H1 (cell line): ENCODE measurements at regions of chr7 and their contacts with region 1.

Region 1: GRCh38 chr7:73738612-73739374 is at the start of gene ABHD11:
- DNase-seq: peak; percentile 97 to 99
- H3K4me3 ChIP-seq: peak within 1 kb of the TSS; percentile 79 to 93 (median 86)
- H3K27ac ChIP-seq: peak within 1 kb of the TSS; percentile 91
- H3K4me1 ChIP-seq: peaks cover 3 to 43% (median 25%) of the 10 kb centered on the region in 4 experiments
- H3K27me3 ChIP-seq: peaks cover 0 to 2% (median 0%) of the 10 kb centered on the region in 4 experiments; a peak in 2 of 7 replicates
- CTCF ChIP-seq: no peak
- EP300 ChIP-seq: peak in 1 of 2 experiments; percentile 85; a peak in 1 of 3 replicates
- POLR2A ChIP-seq: peak in 1 of 2 experiments; percentile 97; a peak in 2 of 3 replicates
- RAD21 ChIP-seq: peak in 1 of 2 experiments; percentile 12; a peak in 1 of 4 replicates
- total RNA-seq, gene ABHD11: 19.8 and 19.9 TPM in 2 replicates

Region 2: GRCh38 chr7:73606801-73607691 is 131.7 kb before region 1 on chr7:
- CTCF ChIA-PET with region 1: interaction called, 87 read pairs
- POLR2A ChIA-PET with region 1: interaction called, 7 read pairs
- DNase-seq: peak in 1 of 2 experiments; percentile 97
- H3K4me3 ChIP-seq: peak overlapping the region in 3 of 4 experiments; percentile 11 to 61 (median 26); a peak in 5 of 8 replicates
- H3K27ac ChIP-seq: no peak overlapping the region
- H3K4me1 ChIP-seq: peaks cover 0 to 7% (median 4%) of the 10 kb centered on the region in 4 experiments; a peak in 6 of 7 replicates
- H3K27me3 ChIP-seq: no peaks in the 10 kb centered on the region; a peak in 1 of 7 replicates
- CTCF ChIP-seq: peak; percentile 91 to 97 (median 92)
- EP300 ChIP-seq: no peak
- POLR2A ChIP-seq: no peak
- RAD21 ChIP-seq: peak; percentile 96 to 97

Region 3: GRCh38 chr7:73758581-73759138 is 19.9 kb after region 1 on chr7:
- CTCF ChIA-PET with region 1: interaction called, 4 read pairs
- POLR2A ChIA-PET with region 1: interaction called, 18 read pairs
- DNase-seq: no peak
- H3K4me3 ChIP-seq: no peak overlapping the region
- H3K27ac ChIP-seq: no peak overlapping the region
- H3K4me1 ChIP-seq: peaks cover 0 to 8% (median 3%) of the 10 kb centered on the region in 4 experiments; a peak in 4 of 7 replicates
- H3K27me3 ChIP-seq: no peaks in the 10 kb centered on the region
- CTCF ChIP-seq: no peak
- EP300 ChIP-seq: no peak
- POLR2A ChIP-seq: no peak
- RAD21 ChIP-seq: no peak

Region 4: DNA sequence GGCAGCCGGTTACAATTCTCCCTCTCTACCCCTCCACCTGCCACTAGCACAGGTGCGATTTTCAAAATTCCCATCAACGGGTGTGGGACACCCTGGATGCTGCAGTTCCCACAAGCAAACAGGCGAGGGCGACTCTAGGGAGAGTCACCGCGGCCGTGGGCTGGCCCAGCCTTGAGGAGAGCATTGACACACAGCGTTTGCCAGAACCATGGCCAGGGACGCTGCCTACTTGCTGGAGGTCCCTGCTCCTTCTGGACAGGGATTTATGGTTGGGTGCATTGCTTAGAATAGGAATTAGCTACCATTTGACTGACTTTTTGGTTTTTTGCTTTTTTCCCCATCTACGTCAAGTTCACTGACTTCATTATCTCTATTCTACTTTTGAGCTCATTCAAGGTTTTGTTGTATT is 73.0 kb after region 1 on chr7:
- CTCF ChIA-PET with region 1: interaction called, 15 read pairs
- POLR2A ChIA-PET with region 1: interaction called, 15 read pairs
- DNase-seq: peak; percentile 56 to 92
- H3K4me3 ChIP-seq: no peak overlapping the region
- H3K27ac ChIP-seq: no peak overlapping the region
- H3K4me1 ChIP-seq: peaks cover 0 to 9% (median 5%) of the 10 kb centered on the region in 4 experiments; a peak in 6 of 7 replicates
- H3K27me3 ChIP-seq: no peaks in the 10 kb centered on the region
- CTCF ChIP-seq: peak; percentile 90 to 97 (median 91)
- EP300 ChIP-seq: no peak
- POLR2A ChIP-seq: no peak
- RAD21 ChIP-seq: peak; percentile 89 to 92

Region 5: DNA sequence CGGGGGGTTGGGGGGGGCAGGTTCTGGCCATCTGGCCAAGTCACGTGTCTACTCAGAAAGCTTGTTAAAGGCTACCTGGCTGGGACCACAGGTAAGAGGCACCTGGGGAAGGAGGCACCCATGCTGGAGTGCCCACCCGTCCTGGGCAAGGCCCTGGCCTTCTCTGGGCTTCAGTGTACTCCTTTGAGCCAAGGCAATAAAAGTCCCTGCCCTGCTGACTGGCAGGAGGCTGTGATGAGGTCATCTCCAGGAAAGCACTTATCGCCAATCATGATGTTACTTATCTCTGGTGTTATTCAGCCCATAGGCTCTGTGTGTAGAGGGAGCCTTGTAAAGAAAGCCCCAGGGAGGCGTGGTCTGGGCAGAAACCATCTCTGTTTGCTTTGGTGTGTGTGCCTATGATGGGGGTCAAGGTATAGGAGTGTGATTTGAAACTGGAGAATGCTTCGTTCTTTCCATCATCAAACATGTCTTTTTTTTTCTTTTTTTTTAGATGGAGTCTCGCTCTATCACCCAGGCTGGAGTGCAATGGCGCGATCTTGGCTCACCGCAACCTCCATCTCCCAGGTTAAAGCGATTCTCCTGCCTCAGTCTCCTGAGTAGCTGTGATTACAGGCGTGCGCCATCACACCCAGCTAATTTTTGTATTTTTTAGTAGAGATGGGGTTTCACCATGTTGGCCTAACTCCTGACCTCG is 89.5 kb after region 1 on chr7:
- CTCF ChIA-PET with region 1: interaction called, 12 read pairs
- POLR2A ChIA-PET with region 1: interaction called, 82 read pairs
- DNase-seq: no peak
- H3K4me3 ChIP-seq: no peak overlapping the region
- H3K27ac ChIP-seq: no peak overlapping the region; the same call in 1 of the 2 replicates
- H3K4me1 ChIP-seq: peaks cover 22 to 52% (median 39%) of the 10 kb centered on the region in 4 experiments
- H3K27me3 ChIP-seq: peaks cover 0 to 4% (median 0%) of the 10 kb centered on the region in 4 experiments; a peak in 2 of 7 replicates
- CTCF ChIP-seq: no peak
- EP300 ChIP-seq: no peak
- POLR2A ChIP-seq: 0 out of 3 replicates have a peak, but pooled peaks of 1 of the 2 experiments have one; percentile 28
- RAD21 ChIP-seq: no peak

Region 6: GRCh38 chr7:73856941-73857340 is 118.1 kb after region 1 on chr7:
- CTCF ChIA-PET with region 1: interaction called, 13 read pairs
- POLR2A ChIA-PET with region 1: interaction called, 6 read pairs
- DNase-seq: no peak
- H3K4me3 ChIP-seq: no peak overlapping the region
- H3K27ac ChIP-seq: no peak overlapping the region
- H3K4me1 ChIP-seq: no peaks in the 10 kb centered on the region
- H3K27me3 ChIP-seq: peaks cover 0 to 4% (median 0%) of the 10 kb centered on the region in 4 experiments; a peak in 3 of 7 replicates
- CTCF ChIP-seq: no peak
- EP300 ChIP-seq: no peak
- POLR2A ChIP-seq: no peak
- RAD21 ChIP-seq: no peak